GM23248 (cell line): ENCODE measurements at regions of chr17 and their contacts with region 1.

Region 1: GRCh38 chr17:42928714-42929496 is 28.3 kb downstream of the G6PC1 start:
- DNase-seq: peak; percentile 91
- H3K4me3 ChIP-seq: 0 out of 2 replicates have a peak overlapping the region, but pooled peaks have one; percentile 19
- H3K27ac ChIP-seq: peak overlapping the region; percentile 83
- H3K4me1 ChIP-seq: peaks cover 8% of the 10 kb centered on the region
- H3K27me3 ChIP-seq: no peaks in the 10 kb centered on the region

Region 2: GRCh38 chr17:42744806-42745617 is 183.9 kb before region 1 on chr17 and contains the start of gene EZH1:
- in situ Hi-C with region 1: loop called (anchors 25 kb)
- DNase-seq: peak; percentile 97
- H3K4me3 ChIP-seq: peak within 1 kb of the TSS; percentile 77
- H3K27ac ChIP-seq: peak within 1 kb of the TSS; percentile 60
- H3K4me1 ChIP-seq: peaks cover 8% of the 10 kb centered on the region
- H3K27me3 ChIP-seq: no peaks in the 10 kb centered on the region
- total RNA-seq, gene EZH1: 22.4 and 22.5 TPM in 2 replicates

Region 3: DNA sequence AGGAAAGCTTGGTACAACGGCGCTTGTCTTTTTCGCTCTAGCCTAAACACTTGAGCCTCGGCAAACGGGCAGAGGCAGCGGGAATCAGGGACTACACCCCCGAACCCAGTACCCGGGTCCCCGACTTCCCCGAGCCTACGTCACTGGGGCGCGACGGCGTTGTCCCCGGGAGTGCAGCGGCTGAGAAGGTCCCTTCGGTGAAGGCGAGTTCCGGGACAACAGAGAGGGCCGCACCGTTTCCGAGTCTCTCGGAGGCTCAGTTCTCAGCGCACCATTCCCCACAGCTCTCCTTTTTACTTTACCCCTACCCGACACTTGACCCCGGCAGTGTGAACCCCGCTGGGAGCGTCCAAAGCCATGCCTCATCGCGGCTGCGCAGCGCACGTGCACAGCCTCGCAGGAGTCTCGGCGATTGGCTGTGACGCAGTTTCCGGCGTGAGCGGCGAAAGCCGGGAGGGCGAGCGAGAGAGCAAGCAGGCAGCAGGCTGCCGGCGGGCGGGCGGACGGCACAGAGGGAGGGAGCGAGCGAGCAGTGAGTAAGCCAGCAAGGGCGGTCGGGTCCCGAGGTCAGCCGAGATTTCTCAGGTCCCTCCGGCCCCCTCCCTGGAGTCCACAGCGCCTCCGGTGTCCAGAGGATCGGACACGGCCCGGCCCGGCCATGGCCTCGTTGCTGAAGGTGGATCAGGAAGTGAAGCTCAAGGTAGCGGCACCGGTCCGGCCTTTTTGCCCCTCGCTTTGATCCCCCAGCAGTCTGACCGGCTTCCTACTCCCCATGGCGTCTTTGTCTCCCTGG is 95.7 kb before region 1 on chr17 and contains the start of gene PSME3:
- in situ Hi-C with region 1: no loop called
- DNase-seq: peak; percentile 97
- H3K4me3 ChIP-seq: peak within 1 kb of the TSS; percentile 94
- H3K27ac ChIP-seq: peak within 1 kb of the TSS; percentile 79
- H3K4me1 ChIP-seq: peaks cover 17% of the 10 kb centered on the region
- H3K27me3 ChIP-seq: no peaks in the 10 kb centered on the region
- total RNA-seq, gene PSME3: 88.1 and 104 TPM in 2 replicates

Region 4: GRCh38 chr17:42843358-42843934 is 85.5 kb before region 1 on chr17:
- in situ Hi-C with region 1: loop called (anchors 5 kb)
- DNase-seq: peak; percentile 81
- H3K4me3 ChIP-seq: no peak overlapping the region
- H3K27ac ChIP-seq: no peak overlapping the region
- H3K4me1 ChIP-seq: peaks cover 13% of the 10 kb centered on the region
- H3K27me3 ChIP-seq: no peaks in the 10 kb centered on the region